HCT116 (cell line): ENCODE measurements at regions of chr6 and their contacts with region 1.

Region 1: GRCh38 chr6:43667245-43668150 is 20.1 kb downstream of the MRPS18A start:
- DNase-seq: peak; percentile 43
- ATAC-seq: peak; percentile 68
- H3K4me3 ChIP-seq: no peak overlapping the region; a peak in 1 of 4 replicates
- H3K27ac ChIP-seq: peak overlapping the region; percentile 49; the same call in 1 of the 2 replicates
- H3K4me1 ChIP-seq: peaks cover 12 to 49% of the 10 kb centered on the region in 2 experiments
- H3K27me3 ChIP-seq: no peaks in the 10 kb centered on the region
- CTCF ChIP-seq: peak; percentile 89 to 97 (median 94)
- POLR2A ChIP-seq: no peak
- RAD21 ChIP-seq: peak; percentile 95

Region 2: GRCh38 chr6:43657221-43657802 is 10.2 kb before region 1 on chr6:
- CTCF ChIA-PET with region 1: interaction called, 11 read pairs
- POLR2A ChIA-PET with region 1: no interaction called
- RAD21 ChIA-PET with region 1: no interaction called
- intact Hi-C with region 1: no loop called
- DNase-seq: no peak
- ATAC-seq: no peak
- H3K4me3 ChIP-seq: no peak overlapping the region
- H3K27ac ChIP-seq: no peak overlapping the region
- H3K4me1 ChIP-seq: no peaks in the 10 kb centered on the region
- H3K27me3 ChIP-seq: no peaks in the 10 kb centered on the region
- CTCF ChIP-seq: 0 out of 6 replicates have a peak, but pooled peaks of 1 of the 3 experiments have one; percentile 9
- POLR2A ChIP-seq: no peak
- RAD21 ChIP-seq: no peak

Region 3: GRCh38 chr6:43679057-43679456 is 11.6 kb after region 1 on chr6:
- CTCF ChIA-PET with region 1: interaction called, 13 read pairs
- POLR2A ChIA-PET with region 1: no interaction called
- RAD21 ChIA-PET with region 1: no interaction called
- intact Hi-C with region 1: no loop called
- DNase-seq: no peak
- ATAC-seq: no peak
- H3K4me3 ChIP-seq: no peak overlapping the region
- H3K27ac ChIP-seq: no peak overlapping the region
- H3K4me1 ChIP-seq: no peaks in the 10 kb centered on the region
- H3K27me3 ChIP-seq: no peaks in the 10 kb centered on the region
- CTCF ChIP-seq: no peak
- POLR2A ChIP-seq: no peak
- RAD21 ChIP-seq: no peak

Region 4: DNA sequence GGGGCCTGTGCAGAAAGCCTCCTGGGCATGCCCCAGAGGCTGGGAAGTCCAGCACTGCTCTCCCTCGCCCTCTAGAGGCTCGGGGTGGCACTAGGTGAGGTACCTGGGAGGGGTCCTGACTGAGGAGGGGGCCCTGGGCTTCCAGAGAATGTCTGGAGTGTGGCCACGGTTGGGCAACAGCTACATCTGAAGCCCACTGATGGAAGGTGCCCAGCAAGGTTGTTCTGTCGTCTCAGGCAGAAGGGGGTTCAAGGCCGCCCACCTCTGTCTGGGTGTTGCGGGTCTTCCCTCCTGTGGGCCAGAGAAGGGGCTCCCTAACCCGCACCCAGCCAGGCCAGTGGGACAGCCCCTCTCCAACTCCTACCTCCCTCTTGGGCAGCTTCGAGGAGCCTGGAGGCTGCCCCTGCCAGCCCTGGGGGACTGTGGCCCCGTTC is 91.1 kb after region 1 on chr6:
- CTCF ChIA-PET with region 1: interaction called, 9 read pairs
- POLR2A ChIA-PET with region 1: no interaction called
- RAD21 ChIA-PET with region 1: no interaction called
- intact Hi-C with region 1: loop called (anchors 2 kb)
- DNase-seq: no peak
- ATAC-seq: peak; percentile 89
- H3K4me3 ChIP-seq: no peak overlapping the region
- H3K27ac ChIP-seq: no peak overlapping the region
- H3K4me1 ChIP-seq: peaks cover 0 to 7% of the 10 kb centered on the region in 2 experiments; a peak in 1 of 4 replicates
- H3K27me3 ChIP-seq: no peaks in the 10 kb centered on the region; the same call in 1 of the 2 replicates
- CTCF ChIP-seq: peak; percentile 71 to 95 (median 87); a peak in 5 of 6 replicates
- POLR2A ChIP-seq: no peak
- RAD21 ChIP-seq: peak; percentile 78

Region 5: GRCh38 chr6:43774776-43775534 is 107.5 kb after region 1 on chr6:
- CTCF ChIA-PET with region 1: interaction called, 12 read pairs
- POLR2A ChIA-PET with region 1: interaction called, 3 read pairs
- RAD21 ChIA-PET with region 1: no interaction called
- intact Hi-C with region 1: no loop called
- DNase-seq: no peak
- ATAC-seq: peak; percentile 21
- H3K4me3 ChIP-seq: no peak overlapping the region
- H3K27ac ChIP-seq: peak overlapping the region; percentile 58
- H3K4me1 ChIP-seq: peaks cover 38 to 43% of the 10 kb centered on the region in 2 experiments
- H3K27me3 ChIP-seq: no peaks in the 10 kb centered on the region
- CTCF ChIP-seq: peak in 2 of 3 experiments; percentile 77 to 84; a peak in 4 of 6 replicates
- POLR2A ChIP-seq: no peak
- RAD21 ChIP-seq: no peak

Region 6: GRCh38 chr6:43951063-43951755 is 283.7 kb after region 1 on chr6:
- CTCF ChIA-PET with region 1: interaction called, 3 read pairs
- POLR2A ChIA-PET with region 1: no interaction called
- RAD21 ChIA-PET with region 1: no interaction called
- intact Hi-C with region 1: loop called (anchors 5 kb)
- DNase-seq: peak; percentile 10
- ATAC-seq: peak; percentile 66; the same call in 1 of the 2 replicates
- H3K4me3 ChIP-seq: no peak overlapping the region
- H3K27ac ChIP-seq: no peak overlapping the region
- H3K4me1 ChIP-seq: no peaks in the 10 kb centered on the region
- H3K27me3 ChIP-seq: no peaks in the 10 kb centered on the region
- CTCF ChIP-seq: peak; percentile 41 to 85 (median 43)
- POLR2A ChIP-seq: no peak
- RAD21 ChIP-seq: peak; percentile 87